AG04450 (cell line): ENCODE measurements at regions of chr17 and their contacts with region 1.

Region 1: DNA sequence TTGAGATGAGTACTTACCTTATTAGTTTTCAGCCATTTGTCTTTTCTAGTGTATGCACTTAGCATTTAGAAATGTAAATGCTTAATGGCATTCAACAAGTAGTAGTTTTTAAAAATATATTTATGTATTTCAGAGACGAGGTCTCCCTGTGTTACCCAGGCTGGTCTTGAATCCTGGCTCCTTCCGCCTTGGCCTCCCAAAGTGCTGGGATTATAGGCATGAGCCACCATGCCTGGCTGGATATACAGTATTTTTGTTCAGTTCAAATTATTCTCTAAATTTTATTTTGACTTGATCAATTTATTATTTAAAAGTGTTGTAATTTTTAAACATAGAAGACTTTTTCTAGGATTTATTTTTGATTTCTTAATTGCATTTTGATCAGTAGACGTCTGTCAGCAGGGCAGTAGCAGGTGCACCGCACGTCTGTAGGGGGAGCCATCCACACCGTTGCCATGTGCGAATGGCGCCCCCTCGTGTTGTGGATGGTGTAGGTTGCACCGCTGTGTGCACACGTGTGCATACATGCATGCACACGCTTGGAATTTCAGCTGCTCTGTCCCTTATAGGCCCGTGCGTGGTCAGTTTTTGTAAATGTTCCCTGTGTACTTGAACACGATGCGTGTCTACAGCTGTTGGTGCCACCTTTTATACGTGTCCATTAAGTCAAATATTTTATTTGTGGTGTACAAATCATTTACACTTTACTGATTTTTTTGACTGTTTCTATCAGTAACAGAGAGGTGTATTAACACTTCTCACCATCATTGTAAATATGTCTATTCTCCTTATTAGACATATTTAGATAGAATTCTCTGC is 30.6 kb downstream of the RPTOR start:
- DNase-seq: peak; percentile 65
- H3K4me3 ChIP-seq: no peak overlapping the region
- H3K27ac ChIP-seq: no peak overlapping the region
- H3K27me3 ChIP-seq: no peaks in the 10 kb centered on the region
- CTCF ChIP-seq: peak; percentile 100

Region 2: DNA sequence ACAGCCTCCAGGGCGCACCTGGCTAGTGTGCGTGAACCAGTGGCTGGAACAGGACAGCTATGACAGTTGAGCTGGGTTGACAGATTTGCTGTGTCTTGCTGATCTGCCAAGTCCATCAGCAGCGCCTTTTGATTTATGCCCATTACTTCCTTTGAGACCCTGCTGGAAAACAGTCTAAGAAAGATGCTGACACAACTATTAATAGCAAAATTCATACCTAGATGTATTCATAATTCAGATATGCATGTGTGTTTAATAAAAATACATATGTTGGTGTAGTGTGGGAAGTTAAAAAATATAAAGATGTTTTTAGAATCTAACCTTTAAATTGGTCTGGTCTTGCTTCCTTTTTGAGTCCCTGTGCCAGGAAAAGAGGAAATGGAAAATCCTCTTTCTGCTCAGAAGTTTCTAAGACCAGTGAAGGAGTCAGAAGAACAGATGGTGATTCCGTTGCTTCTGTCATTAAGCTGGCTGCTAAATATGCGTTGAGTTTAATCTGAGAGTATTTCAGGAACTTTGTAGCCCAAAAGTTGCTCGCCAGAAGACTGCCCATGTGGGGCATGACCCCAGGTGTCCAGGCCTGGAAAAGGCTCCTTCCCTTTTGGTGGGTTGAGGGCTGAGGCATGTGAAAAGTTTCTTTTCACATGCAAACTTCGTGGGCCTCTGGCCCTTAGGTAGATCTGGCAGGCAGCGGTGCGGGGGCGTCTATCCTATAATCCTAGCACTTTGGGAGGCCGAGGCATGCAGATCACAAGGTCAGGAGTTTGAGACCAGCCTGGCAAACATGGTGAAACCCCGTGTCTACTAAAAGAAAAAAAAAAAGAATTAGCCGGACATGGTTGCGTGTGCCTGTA is 200.3 kb before region 1 on chr17:
- CTCF ChIA-PET with region 1: no interaction called
- POLR2A ChIA-PET with region 1: no interaction called
- DNase-seq: no peak
- H3K4me3 ChIP-seq: no peak overlapping the region
- H3K27ac ChIP-seq: no peak overlapping the region
- H3K27me3 ChIP-seq: no peaks in the 10 kb centered on the region
- CTCF ChIP-seq: no peak

Region 3: GRCh38 chr17:80426681-80427326 is 148.5 kb before region 1 on chr17:
- CTCF ChIA-PET with region 1: interaction called, 28 read pairs
- POLR2A ChIA-PET with region 1: no interaction called
- DNase-seq: peak; percentile 16
- H3K4me3 ChIP-seq: no peak overlapping the region
- H3K27ac ChIP-seq: no peak overlapping the region
- H3K27me3 ChIP-seq: no peaks in the 10 kb centered on the region
- CTCF ChIP-seq: peak; percentile 93

Region 4: DNA sequence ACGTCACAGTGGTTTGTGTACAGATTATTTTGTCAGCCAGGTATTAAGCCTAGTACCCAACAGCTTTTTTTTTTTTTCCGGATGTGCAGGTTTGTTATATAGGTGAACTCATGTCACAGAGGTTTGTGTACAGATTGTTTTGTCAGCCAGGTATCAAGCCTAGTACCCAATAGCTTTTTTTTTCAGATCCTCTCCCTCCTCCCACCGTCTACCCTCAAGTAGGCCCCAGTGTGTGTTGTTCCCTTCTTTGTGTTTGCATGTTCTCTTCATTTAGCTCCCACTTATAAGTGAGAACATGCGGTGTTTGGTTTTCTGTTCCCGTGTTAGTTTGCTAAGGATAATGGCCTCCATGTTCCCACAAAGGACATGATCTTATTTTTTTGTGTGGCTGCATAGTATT is 10.7 kb before region 1 on chr17:
- CTCF ChIA-PET with region 1: interaction called, 11 read pairs
- POLR2A ChIA-PET with region 1: no interaction called
- DNase-seq: no peak
- H3K4me3 ChIP-seq: no peak overlapping the region
- H3K27ac ChIP-seq: no peak overlapping the region
- H3K27me3 ChIP-seq: no peaks in the 10 kb centered on the region
- CTCF ChIP-seq: no peak

Region 5: DNA sequence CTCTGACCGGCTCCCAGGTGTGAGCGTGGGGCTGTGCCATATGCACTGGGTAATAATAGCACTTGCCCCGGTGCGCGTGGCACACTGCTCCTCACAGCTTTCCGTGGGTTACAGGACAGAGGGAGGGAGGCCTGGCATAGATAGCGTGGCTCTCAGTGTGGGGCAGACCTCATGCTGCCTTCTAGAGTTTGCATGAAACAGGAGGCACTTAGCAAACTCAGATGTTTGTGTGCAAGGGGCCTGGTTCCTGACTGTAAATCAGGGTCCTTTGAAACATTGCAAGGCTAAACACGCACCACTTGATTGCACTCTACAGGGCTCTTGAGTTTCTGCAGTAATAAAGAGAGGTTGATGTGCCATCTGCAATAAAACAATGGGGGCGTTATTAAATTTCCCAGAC is 71.1 kb after region 1 on chr17:
- CTCF ChIA-PET with region 1: no interaction called
- POLR2A ChIA-PET with region 1: no interaction called
- DNase-seq: no peak
- H3K4me3 ChIP-seq: no peak overlapping the region
- H3K27ac ChIP-seq: no peak overlapping the region
- H3K27me3 ChIP-seq: no peaks in the 10 kb centered on the region
- CTCF ChIP-seq: no peak